CD14-positive monocyte (primary cell): ENCODE measurements at regions of chr4 and their contacts with region 1.

Region 1: DNA sequence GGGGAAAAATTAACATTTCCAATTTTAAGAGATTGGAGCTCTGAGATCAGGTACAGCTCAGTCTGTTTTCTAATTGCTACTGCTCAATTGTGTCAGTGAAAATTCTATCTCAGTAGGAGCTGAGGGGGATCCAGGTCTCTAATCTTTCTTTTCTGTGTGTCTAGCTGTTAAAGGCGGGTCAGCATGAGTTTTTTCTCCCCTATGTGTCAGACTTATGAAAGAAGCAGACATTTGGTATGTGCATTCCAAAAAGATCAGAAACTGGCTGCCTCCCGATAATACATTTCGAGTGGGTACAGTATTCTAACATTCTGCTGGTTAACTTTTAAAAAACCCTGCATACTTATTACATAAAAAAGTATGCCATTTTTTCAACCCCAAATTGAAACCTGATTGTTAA is 72.4 kb downstream of the PCDH7 start:
- DNase-seq: no peak
- H3K4me3 ChIP-seq: no peak overlapping the region
- H3K4me3 Mint-ChIP-seq: no peak overlapping the region
- H3K27ac ChIP-seq: no peak overlapping the region
- H3K27ac Mint-ChIP-seq: no peak overlapping the region
- H3K4me1 ChIP-seq: no peaks in the 10 kb centered on the region
- H3K4me1 Mint-ChIP-seq: no peaks in the 10 kb centered on the region
- H3K27me3 ChIP-seq: no peaks in the 10 kb centered on the region
- H3K27me3 Mint-ChIP-seq: no peaks in the 10 kb centered on the region
- CTCF ChIP-seq: no peak

Region 2: DNA sequence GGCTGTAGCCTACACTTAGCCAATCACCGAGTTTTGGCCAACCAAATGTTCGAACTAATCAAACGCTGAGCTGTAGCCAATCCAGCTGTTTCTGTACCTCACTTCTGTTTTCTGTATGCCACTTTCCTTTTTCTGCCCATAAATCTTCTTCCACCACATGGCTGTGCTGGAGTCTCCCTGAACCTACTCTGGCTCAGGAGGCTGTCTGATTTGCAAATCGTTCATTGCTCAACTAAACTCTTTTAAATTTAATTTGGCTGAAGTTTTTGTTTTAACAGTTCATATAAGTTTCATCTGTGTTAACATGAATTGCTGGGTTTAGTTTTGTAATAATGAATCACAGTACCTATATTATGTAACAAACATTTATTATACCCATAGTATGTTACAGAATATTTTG is 233.1 kb before region 1 on chr4:
- intact Hi-C with region 1: loop called in 1 of 2 experiments (anchors 5 kb)
- DNase-seq: no peak
- H3K4me3 ChIP-seq: no peak overlapping the region
- H3K4me3 Mint-ChIP-seq: no peak overlapping the region
- H3K27ac ChIP-seq: no peak overlapping the region
- H3K27ac Mint-ChIP-seq: no peak overlapping the region
- H3K4me1 ChIP-seq: no peaks in the 10 kb centered on the region
- H3K4me1 Mint-ChIP-seq: no peaks in the 10 kb centered on the region
- H3K27me3 ChIP-seq: no peaks in the 10 kb centered on the region
- H3K27me3 Mint-ChIP-seq: no peaks in the 10 kb centered on the region
- CTCF ChIP-seq: no peak